ENCODE measurements at regions of chr1 and their contacts with region 1.

Region 1: DNA sequence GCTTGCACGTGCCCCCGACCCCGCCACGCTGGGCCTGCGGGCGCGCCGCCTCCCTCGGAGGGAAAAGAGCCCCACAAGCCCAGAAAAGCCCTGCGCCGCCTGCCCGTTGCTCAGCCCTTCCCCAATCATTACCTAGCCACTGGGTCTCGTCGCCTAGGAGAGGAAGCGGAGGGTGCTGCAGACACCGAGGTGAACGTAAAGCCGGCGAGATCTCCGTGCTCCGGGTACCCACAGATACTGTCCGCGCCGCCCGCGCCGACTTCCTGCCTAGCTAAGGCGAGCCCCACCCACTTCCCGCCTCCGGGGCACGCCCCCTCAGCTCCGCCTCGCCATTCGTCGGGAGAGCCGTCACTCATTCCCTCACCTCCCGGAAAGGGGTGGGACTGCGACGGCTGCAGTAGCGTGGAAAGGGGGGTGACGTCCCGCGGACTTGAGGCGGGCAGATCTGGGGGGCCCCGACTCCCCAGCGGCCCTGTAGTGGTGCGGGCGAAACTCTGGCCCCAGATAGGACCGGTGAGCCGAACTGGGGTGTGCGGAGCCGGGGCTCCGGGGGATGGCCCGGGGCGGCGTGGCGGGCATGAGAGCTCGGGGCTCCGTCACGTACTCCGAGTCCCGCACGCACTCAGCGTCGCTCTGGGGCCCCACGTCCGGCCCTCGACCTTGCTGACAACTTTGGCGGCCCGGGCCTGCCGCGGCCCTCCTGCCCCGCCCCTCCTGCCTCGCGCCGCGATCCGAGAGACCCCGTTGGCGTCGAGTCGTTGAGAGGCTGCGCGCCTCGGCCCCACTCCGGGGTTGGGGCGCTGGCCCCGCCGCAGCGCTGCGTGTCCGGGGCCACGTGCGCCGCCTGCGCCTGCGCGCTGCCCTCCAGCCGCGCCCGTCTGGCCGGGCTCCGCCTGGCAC is at the start of gene ENO1:
- DNase-seq: peak; percentile 99
- ATAC-seq: peak; percentile 73
- H3K4me3 Mint-ChIP-seq: peak within 1 kb of the TSS; percentile 90
- H3K27ac Mint-ChIP-seq: peak within 1 kb of the TSS; percentile 100
- H3K4me1 Mint-ChIP-seq: peaks cover 24% of the 10 kb centered on the region
- H3K27me3 Mint-ChIP-seq: no peaks in the 10 kb centered on the region
- CTCF ChIP-seq: no peak
- total RNA-seq, gene ENO1: 4,199 to 4,245 TPM

Region 2: GRCh38 chr1:8809342-8809736 is 69.4 kb before region 1 on chr1:
- CTCF ChIA-PET with region 1: no interaction called
- POLR2A ChIA-PET with region 1: no interaction called
- intact Hi-C with region 1: no loop called
- DNase-seq: no peak
- ATAC-seq: no peak
- H3K4me3 Mint-ChIP-seq: no peak overlapping the region
- H3K27ac Mint-ChIP-seq: no peak overlapping the region
- H3K4me1 Mint-ChIP-seq: peaks cover 25% of the 10 kb centered on the region
- H3K27me3 Mint-ChIP-seq: no peaks in the 10 kb centered on the region
- CTCF ChIP-seq: no peak

Region 3: GRCh38 chr1:8858888-8859706 is 19.6 kb before region 1 on chr1:
- CTCF ChIA-PET with region 1: interaction called, 35 read pairs
- POLR2A ChIA-PET with region 1: interaction called, 197 read pairs
- intact Hi-C with region 1: no loop called
- DNase-seq: peak; percentile 74
- ATAC-seq: peak; percentile 54
- H3K4me3 Mint-ChIP-seq: no peak overlapping the region
- H3K27ac Mint-ChIP-seq: peak overlapping the region; percentile 75
- H3K4me1 Mint-ChIP-seq: peaks cover 34% of the 10 kb centered on the region
- H3K27me3 Mint-ChIP-seq: no peaks in the 10 kb centered on the region
- CTCF ChIP-seq: peak; percentile 68

Region 4: GRCh38 chr1:8899076-8899475 is 20.4 kb after region 1 on chr1:
- CTCF ChIA-PET with region 1: interaction called, 5 read pairs
- POLR2A ChIA-PET with region 1: interaction called, 53 read pairs
- intact Hi-C with region 1: loop called (anchors 2 kb)
- DNase-seq: no peak
- ATAC-seq: no peak
- H3K4me3 Mint-ChIP-seq: peak overlapping the region; percentile 28
- H3K27ac Mint-ChIP-seq: peak overlapping the region; percentile 97
- H3K4me1 Mint-ChIP-seq: peaks cover 49% of the 10 kb centered on the region
- H3K27me3 Mint-ChIP-seq: no peaks in the 10 kb centered on the region
- CTCF ChIP-seq: no peak

Region 5: DNA sequence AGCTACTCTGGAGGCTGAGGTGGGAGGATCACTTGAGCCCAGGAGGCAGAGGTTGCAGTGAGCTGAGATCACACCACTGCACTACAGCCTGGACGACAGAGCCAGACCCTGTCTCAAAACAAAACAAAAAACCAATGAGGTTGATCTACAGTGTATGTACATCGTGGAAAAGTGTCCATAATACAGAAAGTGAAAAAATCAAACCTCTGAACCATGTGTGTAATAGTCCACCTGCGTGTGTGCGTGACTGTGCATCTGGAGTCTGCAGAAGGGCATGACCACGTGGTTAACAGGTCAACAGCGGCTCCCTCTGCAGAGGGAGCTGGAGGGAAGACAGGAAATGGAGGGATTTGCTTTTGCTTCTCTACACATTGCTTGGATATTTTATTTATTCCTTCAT is 32.2 kb after region 1 on chr1:
- CTCF ChIA-PET with region 1: interaction called, 4 read pairs
- POLR2A ChIA-PET with region 1: interaction called, 10 read pairs
- intact Hi-C with region 1: no loop called
- DNase-seq: no peak
- ATAC-seq: peak; percentile 57
- H3K4me3 Mint-ChIP-seq: no peak overlapping the region
- H3K27ac Mint-ChIP-seq: peak overlapping the region; percentile 66
- H3K4me1 Mint-ChIP-seq: peaks cover 39% of the 10 kb centered on the region
- H3K27me3 Mint-ChIP-seq: no peaks in the 10 kb centered on the region
- CTCF ChIP-seq: no peak

Region 6: GRCh38 chr1:8925406-8925805 is 46.7 kb after region 1 on chr1:
- CTCF ChIA-PET with region 1: interaction called, 5 read pairs
- POLR2A ChIA-PET with region 1: interaction called, 139 read pairs
- intact Hi-C with region 1: loop called (anchors 10 kb)
- DNase-seq: no peak
- ATAC-seq: no peak
- H3K4me3 Mint-ChIP-seq: no peak overlapping the region
- H3K27ac Mint-ChIP-seq: no peak overlapping the region
- H3K4me1 Mint-ChIP-seq: peaks cover 28% of the 10 kb centered on the region
- H3K27me3 Mint-ChIP-seq: no peaks in the 10 kb centered on the region
- CTCF ChIP-seq: no peak

Region 7: GRCh38 chr1:8941906-8942305 is 63.2 kb after region 1 on chr1:
- CTCF ChIA-PET with region 1: interaction called, 3 read pairs
- POLR2A ChIA-PET with region 1: interaction called, 17 read pairs
- intact Hi-C with region 1: no loop called
- DNase-seq: no peak
- ATAC-seq: peak; percentile 54
- H3K4me3 Mint-ChIP-seq: no peak overlapping the region
- H3K27ac Mint-ChIP-seq: peak overlapping the region; percentile 98
- H3K4me1 Mint-ChIP-seq: peaks cover 89% of the 10 kb centered on the region
- H3K27me3 Mint-ChIP-seq: no peaks in the 10 kb centered on the region
- CTCF ChIP-seq: no peak

Region 8: DNA sequence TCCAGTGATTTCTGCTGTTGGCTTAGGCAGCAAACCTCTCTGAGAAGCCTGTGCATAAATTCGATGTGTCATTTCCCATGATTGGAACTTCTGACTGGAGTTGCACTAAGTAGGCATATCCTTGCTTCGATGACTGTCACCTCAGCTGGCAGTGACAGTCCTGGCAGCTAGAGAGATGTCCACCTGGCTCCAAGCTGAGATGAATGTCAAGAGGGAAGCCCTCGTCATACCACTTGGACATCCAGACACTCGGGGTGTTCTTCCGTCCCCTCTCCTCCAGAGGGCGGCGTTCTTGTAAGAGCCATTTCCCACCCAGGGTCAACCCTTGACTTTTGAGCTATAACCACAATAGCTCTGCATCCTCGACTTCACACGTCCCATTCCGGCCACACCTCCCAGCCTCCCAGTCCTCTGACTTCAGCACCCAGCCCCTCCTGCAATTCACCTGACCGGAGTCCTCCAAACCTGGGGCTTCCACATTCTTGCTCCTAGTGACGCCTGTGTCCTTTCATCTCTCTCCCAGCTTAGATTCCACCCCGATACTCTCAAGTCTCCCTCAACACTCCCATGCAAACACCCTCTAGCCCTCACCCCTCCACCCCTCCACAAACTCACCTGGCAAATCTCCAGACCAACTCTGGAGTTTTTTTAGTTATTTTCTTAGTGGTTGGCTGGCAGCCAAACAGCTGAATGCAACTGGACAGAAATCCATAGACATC is 84.3 kb after region 1 on chr1:
- CTCF ChIA-PET with region 1: interaction called, 4 read pairs
- POLR2A ChIA-PET with region 1: interaction called, 71 read pairs
- intact Hi-C with region 1: no loop called
- DNase-seq: peak; percentile 84
- ATAC-seq: peak; percentile 50
- H3K4me3 Mint-ChIP-seq: peak overlapping the region; percentile 93
- H3K27ac Mint-ChIP-seq: peak overlapping the region; percentile 92
- H3K4me1 Mint-ChIP-seq: peaks cover 79% of the 10 kb centered on the region
- H3K27me3 Mint-ChIP-seq: no peaks in the 10 kb centered on the region
- CTCF ChIP-seq: peak; percentile 70